ENCODE measurements at regions of chr2 and their contacts with region 1.

Region 1: DNA sequence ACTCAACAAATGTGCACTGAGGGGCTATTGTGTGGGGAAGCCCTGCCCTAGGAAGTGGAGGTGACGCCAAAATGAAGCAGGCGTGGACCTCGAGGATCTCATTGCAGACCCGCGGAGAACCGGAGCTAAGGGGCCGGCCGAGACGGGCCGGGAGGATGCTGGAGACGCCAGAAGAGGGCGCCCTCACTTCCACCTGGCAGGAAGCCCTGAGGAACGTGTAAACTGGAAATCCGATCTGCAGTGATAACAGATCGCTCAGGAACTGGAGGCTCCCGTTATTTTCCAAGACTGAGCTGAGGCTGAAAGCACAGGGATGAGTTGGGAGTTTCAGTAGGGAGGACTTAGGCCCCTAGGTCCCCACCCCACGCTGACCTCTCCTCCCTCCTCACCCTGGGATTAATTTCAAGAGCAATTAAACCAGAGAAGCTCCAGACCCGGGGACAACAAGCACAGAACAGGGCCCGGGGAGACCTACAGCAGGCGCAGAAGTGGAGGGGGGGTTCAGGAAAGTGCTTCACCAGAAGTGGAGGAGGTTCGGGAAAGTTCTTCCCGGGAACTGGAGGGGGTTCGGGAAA is 7.7 kb upstream of the COL6A3 start:
- DNase-seq: peak; percentile 83
- H3K4me3 ChIP-seq: peak overlapping the region; percentile 15
- H3K27ac ChIP-seq: no peak overlapping the region
- H3K4me1 ChIP-seq: no peaks in the 10 kb centered on the region
- H3K27me3 ChIP-seq: peaks cover 21% of the 10 kb centered on the region
- CTCF ChIP-seq: peak; percentile 95

Region 2: GRCh38 chr2:237165405-237166276 is 256.0 kb before region 1 on chr2:
- CTCF ChIA-PET with region 1: interaction called, 11 read pairs
- POLR2A ChIA-PET with region 1: no interaction called
- intact Hi-C with region 1: no loop called
- DNase-seq: peak; percentile 45
- H3K4me3 ChIP-seq: no peak overlapping the region
- H3K27ac ChIP-seq: no peak overlapping the region
- H3K4me1 ChIP-seq: no peaks in the 10 kb centered on the region
- H3K27me3 ChIP-seq: peaks cover 3% of the 10 kb centered on the region
- CTCF ChIP-seq: peak; percentile 62

Region 3: DNA sequence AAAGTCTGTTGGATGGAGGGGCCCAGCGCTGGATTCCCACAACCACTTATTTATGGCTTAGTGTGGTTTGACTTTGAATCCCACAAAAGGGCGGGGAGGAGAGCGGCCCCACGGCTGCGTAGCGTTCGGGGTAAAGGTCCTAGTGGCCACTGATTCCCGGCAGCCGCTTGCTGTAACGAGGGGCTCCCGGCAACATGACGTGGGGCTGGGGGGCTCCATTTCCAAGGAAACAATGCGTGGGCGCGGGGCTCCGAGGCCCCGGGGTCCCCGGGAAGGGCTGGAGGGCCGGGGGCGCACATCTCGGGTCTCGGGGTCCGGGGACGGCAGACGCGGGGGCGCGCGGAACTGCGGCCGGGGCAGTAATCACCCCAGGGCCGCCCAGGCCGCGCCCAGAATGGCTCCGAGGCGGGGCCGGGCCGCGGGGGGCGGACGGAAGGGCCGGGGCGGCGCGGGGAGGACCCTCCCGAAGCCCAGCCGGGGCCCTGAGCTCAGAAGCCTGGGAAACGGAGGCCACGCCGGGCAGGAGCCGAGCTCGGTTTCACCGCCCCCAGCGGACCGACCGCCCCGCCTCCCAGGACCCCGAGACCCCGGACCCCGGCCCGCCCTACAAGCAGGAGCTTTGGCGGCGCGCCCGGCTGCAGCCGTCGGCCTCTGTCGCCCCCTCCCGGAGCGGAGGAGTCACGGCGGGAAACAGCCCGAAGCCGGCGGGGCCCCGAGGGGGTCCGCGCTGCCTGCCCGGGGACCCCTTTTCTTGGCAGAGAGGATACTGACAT is 53.5 kb after region 1 on chr2:
- CTCF ChIA-PET with region 1: interaction called, 8 read pairs
- POLR2A ChIA-PET with region 1: interaction called, 7 read pairs
- intact Hi-C with region 1: loop called (anchors 5 kb)
- DNase-seq: peak; percentile 80
- H3K4me3 ChIP-seq: peak overlapping the region; percentile 75
- H3K27ac ChIP-seq: peak overlapping the region; percentile 85
- H3K4me1 ChIP-seq: peaks cover 6% of the 10 kb centered on the region
- H3K27me3 ChIP-seq: peaks cover 42% of the 10 kb centered on the region
- CTCF ChIP-seq: peak; percentile 83

Region 4: GRCh38 chr2:237572021-237572741 is 150.6 kb after region 1 on chr2:
- CTCF ChIA-PET with region 1: interaction called, 26 read pairs
- POLR2A ChIA-PET with region 1: no interaction called
- intact Hi-C with region 1: loop called (anchors 1 kb)
- DNase-seq: peak; percentile 92
- H3K4me3 ChIP-seq: no peak overlapping the region
- H3K27ac ChIP-seq: no peak overlapping the region
- H3K4me1 ChIP-seq: no peaks in the 10 kb centered on the region
- H3K27me3 ChIP-seq: no peaks in the 10 kb centered on the region
- CTCF ChIP-seq: peak; percentile 99

Region 5: DNA sequence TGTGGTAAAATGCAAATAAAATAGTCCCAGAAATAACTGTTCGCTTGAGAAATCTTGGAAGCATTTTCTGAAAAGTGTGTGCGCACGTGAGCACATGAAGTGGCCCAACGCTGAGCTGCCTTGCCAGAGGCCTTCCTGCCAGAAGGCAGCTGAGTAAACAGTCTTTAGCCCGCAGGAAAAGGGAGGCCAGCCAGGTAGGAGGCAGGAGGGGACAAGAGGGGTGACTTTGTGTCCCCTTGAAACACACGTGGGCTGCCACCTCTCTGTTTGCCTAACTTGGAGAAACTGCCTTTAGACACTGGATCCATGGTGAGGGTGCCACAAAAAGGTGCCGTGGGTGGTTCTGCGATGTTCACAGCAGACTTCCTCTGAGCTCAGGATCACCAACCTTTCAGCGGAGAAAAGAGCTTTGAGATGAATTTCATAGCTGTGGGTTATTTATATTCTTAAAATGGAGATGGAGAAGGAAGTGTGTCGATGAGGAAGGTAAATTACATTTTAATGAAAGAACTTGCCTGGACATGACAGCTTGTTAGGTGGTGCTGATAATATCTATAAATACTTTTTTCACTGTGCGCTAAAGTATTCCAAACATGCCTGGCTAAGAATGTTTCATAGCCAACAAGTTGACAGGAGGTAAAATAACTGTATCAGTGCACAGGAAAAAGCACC is 968.4 kb after region 1 on chr2:
- CTCF ChIA-PET with region 1: no interaction called
- POLR2A ChIA-PET with region 1: no interaction called
- intact Hi-C with region 1: no loop called
- DNase-seq: no peak
- H3K4me3 ChIP-seq: no peak overlapping the region
- H3K27ac ChIP-seq: no peak overlapping the region
- H3K4me1 ChIP-seq: peaks cover 4% of the 10 kb centered on the region
- H3K27me3 ChIP-seq: no peaks in the 10 kb centered on the region
- CTCF ChIP-seq: no peak

Measured in A673 (cell line).